ENCODE measurements at regions of chr10 and their contacts with region 1.

Region 1: GRCh38 chr10:79195091-79195923 is 126.5 kb downstream of the ZMIZ1 start:
- DNase-seq: peak; percentile 87
- H3K27ac ChIP-seq: peak overlapping the region; percentile 94
- CTCF ChIP-seq: peak; percentile 92

Region 2: DNA sequence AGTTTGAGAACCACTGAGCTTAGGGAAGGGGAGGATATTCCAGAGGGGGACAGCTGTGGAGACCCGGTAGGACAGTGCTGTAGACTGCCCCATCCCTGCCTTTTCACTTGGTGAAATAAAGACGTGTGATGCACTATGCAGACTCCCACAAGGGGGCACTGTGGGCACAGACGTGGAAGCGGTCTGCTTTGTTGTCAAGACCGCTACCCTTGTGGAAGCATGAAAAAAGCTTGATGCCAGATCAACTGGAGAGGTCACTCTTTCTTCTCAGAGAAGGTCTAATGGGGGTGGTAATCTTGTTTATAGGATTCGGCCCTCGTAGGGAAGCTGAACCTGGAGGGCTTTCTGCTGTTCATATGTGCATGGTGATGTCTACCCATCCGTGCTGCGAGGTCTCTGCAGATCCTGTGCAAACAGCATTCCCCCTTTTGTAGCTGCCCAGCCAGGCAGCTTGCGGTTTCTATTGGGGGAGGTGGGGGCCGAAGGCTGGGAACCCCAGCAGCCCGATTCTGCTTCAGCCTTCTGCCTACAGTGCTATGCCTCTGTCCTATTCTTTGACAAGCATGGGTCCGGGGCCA is 1147.9 kb before region 1 on chr10:
- CTCF ChIA-PET with region 1: interaction called, 22 read pairs
- POLR2A ChIA-PET with region 1: no interaction called
- DNase-seq: peak; percentile 75
- H3K27ac ChIP-seq: no peak overlapping the region
- CTCF ChIP-seq: peak; percentile 91

Region 3: DNA sequence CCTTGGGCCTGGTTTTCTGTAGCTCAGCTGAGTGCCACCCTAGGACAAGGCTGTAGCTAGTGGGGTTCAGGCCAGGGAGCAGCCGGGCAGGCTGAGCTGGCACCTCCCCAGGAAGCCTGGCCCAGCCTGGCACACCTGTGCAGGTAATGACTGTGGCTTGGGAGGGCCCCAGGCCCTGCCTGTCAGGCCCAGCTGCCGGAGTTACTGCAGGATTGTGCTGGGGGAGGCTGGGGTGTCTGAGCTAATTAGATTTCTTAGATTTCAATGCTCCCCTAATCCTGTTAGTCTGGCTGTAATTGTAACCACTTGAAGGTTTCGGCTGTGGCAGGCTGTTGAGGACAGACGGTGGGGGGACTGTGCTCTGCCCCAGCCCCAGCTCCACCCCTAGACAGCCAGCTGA is 120.6 kb before region 1 on chr10:
- CTCF ChIA-PET with region 1: interaction called, 42 read pairs
- POLR2A ChIA-PET with region 1: no interaction called
- DNase-seq: no peak
- H3K27ac ChIP-seq: peak overlapping the region; percentile 100
- CTCF ChIP-seq: no peak

Region 4: GRCh38 chr10:79149662-79150443 is 45.5 kb before region 1 on chr10:
- CTCF ChIA-PET with region 1: interaction called, 14 read pairs
- POLR2A ChIA-PET with region 1: interaction called, 8 read pairs
- DNase-seq: peak; percentile 91
- H3K27ac ChIP-seq: peak overlapping the region; percentile 99
- CTCF ChIP-seq: no peak

Region 5: DNA sequence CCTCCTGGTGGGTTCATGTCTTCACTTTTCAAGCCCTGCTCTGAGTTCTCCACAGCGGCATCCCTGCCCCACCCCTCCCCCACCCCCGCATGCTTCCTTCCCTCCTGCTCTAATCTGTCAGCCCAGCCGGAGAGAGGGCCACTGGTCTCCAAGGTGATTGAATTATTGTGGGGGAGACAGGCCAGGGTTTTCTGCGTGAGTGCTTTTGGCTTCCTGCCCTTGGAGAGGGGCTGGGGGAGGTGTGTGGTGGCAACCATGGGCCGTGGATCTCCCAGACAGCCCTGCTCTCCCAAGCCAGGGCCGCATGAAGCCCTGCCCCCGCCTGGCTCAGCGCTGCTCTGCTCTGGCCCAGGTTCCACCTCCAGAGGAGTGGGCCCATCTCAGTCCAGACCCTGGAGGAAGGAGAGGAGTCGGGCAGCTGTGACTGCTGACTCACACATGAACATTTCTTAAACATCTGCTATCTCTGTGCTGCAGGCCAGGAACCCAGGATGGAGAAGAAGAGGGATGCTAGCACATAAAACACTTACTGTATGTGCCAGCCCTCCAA is 16.6 kb before region 1 on chr10:
- CTCF ChIA-PET with region 1: interaction called, 12 read pairs
- POLR2A ChIA-PET with region 1: no interaction called
- DNase-seq: no peak
- H3K27ac ChIP-seq: peak overlapping the region; percentile 81
- CTCF ChIP-seq: no peak